B cell (primary cell): ENCODE measurements at regions of chr5 and their contacts with region 1.

Region 1: GRCh38 chr5:112146323-112147226 is 272.5 kb downstream of the EPB41L4A start:
- DNase-seq: peak; percentile 77
- ATAC-seq: peak; percentile 90
- H3K4me3 ChIP-seq: no peak overlapping the region
- H3K4me3 Mint-ChIP-seq: no peak overlapping the region
- H3K27ac ChIP-seq: no peak overlapping the region
- H3K27ac Mint-ChIP-seq: no peak overlapping the region
- H3K4me1 ChIP-seq: no peaks in the 10 kb centered on the region
- H3K4me1 Mint-ChIP-seq: no peaks in the 10 kb centered on the region
- H3K27me3 ChIP-seq: peaks cover 0 to 5% (median 0%) of the 10 kb centered on the region in 4 experiments
- H3K27me3 Mint-ChIP-seq: peaks cover 16% of the 10 kb centered on the region
- CTCF ChIP-seq: peak; percentile 91

Region 2: GRCh38 chr5:111530298-111530740 is 616.3 kb before region 1 on chr5:
- CTCF ChIA-PET with region 1: interaction called, 6 read pairs
- POLR2A ChIA-PET with region 1: no interaction called
- intact Hi-C with region 1: loop called (anchors 5 kb)
- DNase-seq: peak; percentile 89
- ATAC-seq: peak; percentile 100
- H3K4me3 ChIP-seq: peak overlapping the region in 1 of 5 experiments; percentile 8
- H3K4me3 Mint-ChIP-seq: peak overlapping the region; percentile 53
- H3K27ac ChIP-seq: peak overlapping the region; percentile 32 to 83
- H3K27ac Mint-ChIP-seq: peak overlapping the region; percentile 69
- H3K4me1 ChIP-seq: peaks cover 13 to 17% of the 10 kb centered on the region in 2 donors
- H3K4me1 Mint-ChIP-seq: peaks cover 20% of the 10 kb centered on the region
- H3K27me3 ChIP-seq: no peaks in the 10 kb centered on the region
- H3K27me3 Mint-ChIP-seq: peaks cover 3% of the 10 kb centered on the region
- CTCF ChIP-seq: no peak

Region 3: GRCh38 chr5:112186401-112186990 is 39.9 kb after region 1 on chr5:
- CTCF ChIA-PET with region 1: no interaction called
- POLR2A ChIA-PET with region 1: no interaction called
- intact Hi-C with region 1: no loop called
- DNase-seq: peak; percentile 31
- ATAC-seq: no peak
- H3K4me3 ChIP-seq: no peak overlapping the region
- H3K4me3 Mint-ChIP-seq: no peak overlapping the region
- H3K27ac ChIP-seq: no peak overlapping the region
- H3K27ac Mint-ChIP-seq: no peak overlapping the region
- H3K4me1 ChIP-seq: no peaks in the 10 kb centered on the region
- H3K4me1 Mint-ChIP-seq: no peaks in the 10 kb centered on the region
- H3K27me3 ChIP-seq: no peaks in the 10 kb centered on the region
- H3K27me3 Mint-ChIP-seq: peaks cover 18% of the 10 kb centered on the region
- CTCF ChIP-seq: peak; percentile 73